ENCODE measurements at regions of chr12 and their contacts with region 1.

Region 1: GRCh38 chr12:60393093-60393492 is 797.3 kb downstream of the SLC16A7 start:
- DNase-seq: no peak
- ATAC-seq: no peak
- H3K4me3 ChIP-seq: no peak overlapping the region
- H3K27ac ChIP-seq: no peak overlapping the region
- H3K4me1 ChIP-seq: no peaks in the 10 kb centered on the region
- H3K27me3 ChIP-seq: no peaks in the 10 kb centered on the region
- CTCF ChIP-seq: no peak

Region 2: GRCh38 chr12:60290532-60290931 is 102.6 kb before region 1 on chr12:
- intact Hi-C with region 1: no loop called
- DNase-seq: no peak
- ATAC-seq: no peak
- H3K4me3 ChIP-seq: no peak overlapping the region
- H3K27ac ChIP-seq: no peak overlapping the region
- H3K4me1 ChIP-seq: no peaks in the 10 kb centered on the region
- H3K27me3 ChIP-seq: no peaks in the 10 kb centered on the region
- CTCF ChIP-seq: no peak

Region 3: DNA sequence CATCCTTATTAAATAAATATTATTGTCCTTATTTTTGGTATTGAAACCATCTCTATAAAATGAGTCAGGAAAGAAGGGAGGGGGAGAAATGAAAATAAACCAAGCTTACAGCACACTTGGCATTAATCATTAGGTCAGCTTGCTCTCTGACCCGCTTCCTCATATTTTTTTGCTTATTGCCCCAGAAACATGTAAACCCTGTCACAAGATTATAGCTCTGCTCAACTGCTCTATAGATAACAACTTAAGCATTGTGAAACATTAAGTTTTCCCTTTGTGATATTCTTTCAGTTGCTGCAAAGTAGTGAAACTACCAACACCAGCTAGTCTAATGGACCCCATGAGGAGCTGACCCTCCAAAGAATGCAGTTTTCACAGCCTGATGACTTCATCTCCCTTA is 22.3 kb after region 1 on chr12:
- intact Hi-C with region 1: loop called in 1 of 10 experiments (anchors 2 kb)
- DNase-seq: no peak
- ATAC-seq: no peak
- H3K4me3 ChIP-seq: no peak overlapping the region
- H3K27ac ChIP-seq: no peak overlapping the region
- H3K4me1 ChIP-seq: no peaks in the 10 kb centered on the region
- H3K27me3 ChIP-seq: no peaks in the 10 kb centered on the region
- CTCF ChIP-seq: no peak

Region 4: GRCh38 chr12:60437297-60437696 is 44.2 kb after region 1 on chr12:
- intact Hi-C with region 1: no loop called
- DNase-seq: no peak
- ATAC-seq: no peak
- H3K4me3 ChIP-seq: no peak overlapping the region
- H3K27ac ChIP-seq: no peak overlapping the region
- H3K4me1 ChIP-seq: no peaks in the 10 kb centered on the region
- H3K27me3 ChIP-seq: no peaks in the 10 kb centered on the region
- CTCF ChIP-seq: no peak

Measured in heart right ventricle (tissue), 16 donors.